Activated B cell treated with CpG ODN at 0.5 μM for 24 hours (primary cell): ENCODE measurements at regions of chr5 and their contacts with region 1.

Region 1: GRCh38 chr5:139273572-139274289 is 19.8 kb upstream of the MATR3 start:
- DNase-seq: peak; percentile 93
- ATAC-seq: peak; percentile 96
- H3K4me3 Mint-ChIP-seq: peak overlapping the region; percentile 90
- H3K27ac Mint-ChIP-seq: peak overlapping the region; percentile 91
- H3K4me1 Mint-ChIP-seq: peaks cover 52% of the 10 kb centered on the region
- H3K27me3 Mint-ChIP-seq: no peaks in the 10 kb centered on the region
- CTCF ChIP-seq: no peak

Region 2: GRCh38 chr5:138641547-138642298 is 632.0 kb before region 1 on chr5:
- CTCF ChIA-PET with region 1: no interaction called
- POLR2A ChIA-PET with region 1: no interaction called
- intact Hi-C with region 1: loop called (anchors 5 kb)
- DNase-seq: peak; percentile 40
- ATAC-seq: peak; percentile 25
- H3K4me3 Mint-ChIP-seq: no peak overlapping the region
- H3K27ac Mint-ChIP-seq: no peak overlapping the region
- H3K4me1 Mint-ChIP-seq: peaks cover 3% of the 10 kb centered on the region
- H3K27me3 Mint-ChIP-seq: peaks cover 11% of the 10 kb centered on the region
- CTCF ChIP-seq: no peak

Region 3: GRCh38 chr5:139197710-139198669 is 75.7 kb before region 1 on chr5 and contains the start of gene SIL1:
- CTCF ChIA-PET with region 1: interaction called, 3 read pairs
- POLR2A ChIA-PET with region 1: interaction called, 7 read pairs
- intact Hi-C with region 1: loop called (anchors 1 kb)
- DNase-seq: peak; percentile 91
- ATAC-seq: peak; percentile 98
- H3K4me3 Mint-ChIP-seq: peak within 1 kb of the TSS; percentile 91
- H3K27ac Mint-ChIP-seq: peak within 1 kb of the TSS; percentile 90
- H3K4me1 Mint-ChIP-seq: peaks cover 21% of the 10 kb centered on the region
- H3K27me3 Mint-ChIP-seq: no peaks in the 10 kb centered on the region
- CTCF ChIP-seq: no peak
- total RNA-seq, gene SIL1: 16.1 and 22.0 TPM in 2 replicates

Region 4: GRCh38 chr5:139287890-139288635 is 14.3 kb after region 1 on chr5:
- CTCF ChIA-PET with region 1: no interaction called
- POLR2A ChIA-PET with region 1: interaction called, 98 read pairs
- intact Hi-C with region 1: loop called (anchors 1 kb)
- DNase-seq: no peak
- ATAC-seq: peak; percentile 42
- H3K4me3 Mint-ChIP-seq: no peak overlapping the region
- H3K27ac Mint-ChIP-seq: no peak overlapping the region
- H3K4me1 Mint-ChIP-seq: peaks cover 3% of the 10 kb centered on the region
- H3K27me3 Mint-ChIP-seq: no peaks in the 10 kb centered on the region
- CTCF ChIP-seq: no peak

Region 5: GRCh38 chr5:139341650-139342422 is 68.1 kb after region 1 on chr5 and contains the start of gene PAIP2:
- CTCF ChIA-PET with region 1: no interaction called
- POLR2A ChIA-PET with region 1: interaction called, 15 read pairs
- intact Hi-C with region 1: loop called (anchors 1 kb)
- DNase-seq: peak; percentile 95
- ATAC-seq: peak; percentile 87
- H3K4me3 Mint-ChIP-seq: peak within 1 kb of the TSS; percentile 96
- H3K27ac Mint-ChIP-seq: peak within 1 kb of the TSS; percentile 95
- H3K4me1 Mint-ChIP-seq: peaks cover 52% of the 10 kb centered on the region
- H3K27me3 Mint-ChIP-seq: no peaks in the 10 kb centered on the region
- CTCF ChIP-seq: no peak
- total RNA-seq, gene PAIP2: 79.7 and 80.8 TPM in 2 replicates

Region 6: DNA sequence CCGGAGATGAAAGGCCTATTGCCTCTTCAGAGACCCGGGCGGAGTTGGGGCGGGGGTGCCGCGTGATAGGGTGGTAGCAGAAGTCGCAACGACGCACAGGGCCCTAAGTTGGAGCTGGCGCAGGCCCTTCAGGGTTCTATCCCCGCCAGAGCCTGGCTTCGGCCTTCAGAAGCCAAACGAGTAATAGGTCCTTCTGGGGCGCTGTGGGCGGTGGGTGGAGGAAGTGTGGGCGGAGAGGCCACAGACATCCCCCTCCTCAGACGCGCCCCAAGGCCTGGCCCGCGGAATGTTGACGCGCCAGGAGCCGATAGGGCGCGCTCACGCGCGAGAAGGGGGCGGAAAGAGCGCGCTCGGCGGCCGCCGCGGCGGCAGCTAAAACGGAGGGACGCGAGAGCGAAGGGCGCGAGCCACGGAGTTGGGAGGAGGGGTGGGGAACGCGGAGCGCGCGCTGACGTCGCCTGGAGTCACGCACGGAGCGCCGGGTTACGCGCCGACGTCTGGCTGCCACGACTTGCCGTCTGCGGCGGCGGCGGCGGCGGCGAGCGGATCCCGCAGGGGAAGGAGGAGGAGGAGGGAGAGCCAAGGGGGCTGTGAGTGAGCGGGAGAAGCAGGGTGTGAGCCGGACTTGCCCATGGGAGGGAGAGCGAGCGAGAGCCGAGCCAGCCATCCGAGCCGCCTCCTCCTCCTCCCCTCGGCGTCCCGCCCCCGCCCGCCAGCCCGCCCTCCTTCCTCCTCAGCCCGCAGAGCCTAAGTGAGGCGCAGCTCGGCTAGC is 833.8 kb after region 1 on chr5:
- CTCF ChIA-PET with region 1: no interaction called
- POLR2A ChIA-PET with region 1: no interaction called
- intact Hi-C with region 1: loop called (anchors 5 kb)
- DNase-seq: peak; percentile 92
- ATAC-seq: peak; percentile 89
- H3K4me3 Mint-ChIP-seq: peak overlapping the region; percentile 98
- H3K27ac Mint-ChIP-seq: peak overlapping the region; percentile 97
- H3K4me1 Mint-ChIP-seq: peaks cover 44% of the 10 kb centered on the region
- H3K27me3 Mint-ChIP-seq: peaks cover 15% of the 10 kb centered on the region
- CTCF ChIP-seq: no peak